Activated T-helper 2 cell treated with anti-CD3 and anti-CD28 coated beads, Interferon-gamma antibody, Interleukin-2, Interleukin-4, amounts not matched to agents 10 μg/mL and 5 μg/mL and 100 μg/mL, durations not matched to agents 14 hours and 24 hours and 36 hours (primary cell): ENCODE measurements at regions of chr5 and their contacts with region 1.

Region 1: GRCh38 chr5:40755407-40756365 is at the start of gene TTC33:
- DNase-seq: peak; percentile 93
- H3K4me3 Mint-ChIP-seq: peak within 1 kb of the TSS; percentile 41
- H3K27ac Mint-ChIP-seq: no peak within 1 kb of the TSS
- H3K4me1 Mint-ChIP-seq: peaks cover 5% of the 10 kb centered on the region
- H3K27me3 Mint-ChIP-seq: no peaks in the 10 kb centered on the region
- total RNA-seq, gene TTC33: 29.0 and 29.3 TPM in 2 replicates

Region 2: GRCh38 chr5:39209924-39210323 is 1545.8 kb before region 1 on chr5:
- intact Hi-C with region 1: loop called (anchors 5 kb)
- DNase-seq: peak; percentile 82
- H3K4me3 Mint-ChIP-seq: peak overlapping the region; percentile 73
- H3K27ac Mint-ChIP-seq: peak overlapping the region; percentile 90
- H3K4me1 Mint-ChIP-seq: peaks cover 87% of the 10 kb centered on the region
- H3K27me3 Mint-ChIP-seq: no peaks in the 10 kb centered on the region

Region 3: GRCh38 chr5:39714036-39714698 is 1041.5 kb before region 1 on chr5:
- intact Hi-C with region 1: loop called (anchors 5 kb)
- DNase-seq: no peak
- H3K4me3 Mint-ChIP-seq: no peak overlapping the region
- H3K27ac Mint-ChIP-seq: no peak overlapping the region
- H3K4me1 Mint-ChIP-seq: no peaks in the 10 kb centered on the region
- H3K27me3 Mint-ChIP-seq: peaks cover 10% of the 10 kb centered on the region

Region 4: GRCh38 chr5:40404613-40405012 is 351.1 kb before region 1 on chr5:
- intact Hi-C with region 1: loop called (anchors 5 kb)
- DNase-seq: no peak
- H3K4me3 Mint-ChIP-seq: peak overlapping the region; percentile 37
- H3K27ac Mint-ChIP-seq: peak overlapping the region; percentile 84
- H3K4me1 Mint-ChIP-seq: peaks cover 77% of the 10 kb centered on the region
- H3K27me3 Mint-ChIP-seq: no peaks in the 10 kb centered on the region

Region 5: DNA sequence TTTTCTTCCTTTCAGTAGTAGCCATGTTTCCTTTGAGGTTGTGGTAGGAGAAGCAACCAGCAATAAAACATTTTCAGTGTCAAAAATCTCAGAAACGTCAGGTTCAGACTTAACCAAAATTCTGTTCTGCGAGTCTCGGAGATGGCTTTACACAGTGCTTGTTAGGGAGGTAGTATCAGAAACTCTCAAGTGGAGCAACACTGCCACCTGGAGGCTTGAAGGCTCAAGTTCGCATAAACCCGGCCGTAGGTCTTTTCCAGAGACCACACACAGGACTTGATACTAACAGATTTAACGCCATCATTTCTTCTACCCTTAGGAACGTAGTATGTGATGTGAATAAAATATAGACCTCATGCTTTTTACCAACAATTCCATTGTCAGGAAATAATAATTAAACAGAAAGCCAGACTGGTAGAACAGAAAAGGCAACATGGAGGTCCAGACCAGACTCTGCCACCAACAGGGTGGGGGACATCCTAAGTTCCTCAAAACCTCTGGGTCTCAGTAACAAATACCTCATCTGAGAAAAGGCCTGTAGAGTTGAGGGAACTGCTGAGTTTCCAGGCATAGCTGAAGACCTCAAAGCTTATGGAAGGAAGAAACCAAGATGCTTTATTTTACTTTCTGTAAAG is 67.4 kb before region 1 on chr5:
- intact Hi-C with region 1: loop called (anchors 2 kb)
- DNase-seq: peak; percentile 76
- H3K4me3 Mint-ChIP-seq: peak overlapping the region; percentile 76
- H3K27ac Mint-ChIP-seq: peak overlapping the region; percentile 73
- H3K4me1 Mint-ChIP-seq: peaks cover 70% of the 10 kb centered on the region
- H3K27me3 Mint-ChIP-seq: no peaks in the 10 kb centered on the region

Region 6: DNA sequence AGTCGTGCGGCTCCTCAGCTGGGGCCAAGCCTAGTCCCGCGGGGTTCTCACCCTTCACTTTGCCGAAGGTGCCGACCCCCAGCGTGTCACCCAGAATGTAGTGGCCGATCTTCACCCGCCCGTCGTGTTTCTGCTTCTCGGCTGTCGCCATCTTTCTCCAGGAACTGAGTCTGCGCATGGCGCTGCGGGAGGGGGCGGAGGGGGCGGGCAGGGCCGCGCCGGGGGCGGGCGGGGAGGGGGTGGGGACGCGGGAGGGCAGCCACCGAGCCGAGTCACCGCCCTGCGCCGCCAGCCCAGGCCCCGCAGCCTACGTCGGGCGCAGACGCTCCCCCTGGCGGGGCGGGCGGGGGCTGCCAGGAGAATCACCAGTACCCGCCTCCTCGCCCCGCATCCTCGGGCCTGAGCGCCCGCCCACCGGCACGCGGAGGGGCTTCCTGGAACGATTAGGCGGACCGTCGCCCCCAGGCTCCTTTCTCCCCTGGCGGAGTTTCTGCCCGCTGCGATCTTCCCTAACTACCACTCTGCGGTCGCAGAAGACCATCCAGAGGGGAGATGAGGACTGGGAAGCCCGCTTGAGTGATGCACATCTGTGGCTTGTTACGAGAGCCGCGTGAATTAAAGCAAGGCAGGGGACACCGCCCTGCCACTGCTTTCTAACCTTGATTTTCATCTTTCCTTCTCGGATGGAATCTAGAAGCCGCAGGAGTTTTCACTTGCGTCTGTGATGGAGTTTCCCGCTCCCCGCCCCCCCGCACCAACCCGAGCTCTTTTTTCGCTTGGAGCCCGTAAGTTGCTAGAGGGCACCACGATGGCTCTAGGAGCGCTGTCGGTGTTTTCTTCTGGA is 42.5 kb after region 1 on chr5 and contains the start of gene PRKAA1:
- intact Hi-C with region 1: loop called (anchors 1 kb)
- DNase-seq: peak; percentile 86
- H3K4me3 Mint-ChIP-seq: peak within 1 kb of the TSS; percentile 88
- H3K27ac Mint-ChIP-seq: peak within 1 kb of the TSS; percentile 90
- H3K4me1 Mint-ChIP-seq: peaks cover 32% of the 10 kb centered on the region
- H3K27me3 Mint-ChIP-seq: peaks cover 9% of the 10 kb centered on the region
- total RNA-seq, gene PRKAA1: 61.2 and 61.7 TPM in 2 replicates

Region 7: GRCh38 chr5:40879163-40879942 is 123.7 kb after region 1 on chr5:
- intact Hi-C with region 1: loop called (anchors 1 kb)
- DNase-seq: no peak
- H3K4me3 Mint-ChIP-seq: no peak overlapping the region
- H3K27ac Mint-ChIP-seq: no peak overlapping the region
- H3K4me1 Mint-ChIP-seq: peaks cover 4% of the 10 kb centered on the region
- H3K27me3 Mint-ChIP-seq: peaks cover 12% of the 10 kb centered on the region

Region 8: GRCh38 chr5:41172012-41172411 is 416.3 kb after region 1 on chr5:
- intact Hi-C with region 1: no loop called
- DNase-seq: no peak
- H3K4me3 Mint-ChIP-seq: no peak overlapping the region
- H3K27ac Mint-ChIP-seq: no peak overlapping the region
- H3K4me1 Mint-ChIP-seq: no peaks in the 10 kb centered on the region
- H3K27me3 Mint-ChIP-seq: no peaks in the 10 kb centered on the region